GM12878 (cell line): ENCODE measurements at regions of chr15 and their contacts with region 1.

Region 1: DNA sequence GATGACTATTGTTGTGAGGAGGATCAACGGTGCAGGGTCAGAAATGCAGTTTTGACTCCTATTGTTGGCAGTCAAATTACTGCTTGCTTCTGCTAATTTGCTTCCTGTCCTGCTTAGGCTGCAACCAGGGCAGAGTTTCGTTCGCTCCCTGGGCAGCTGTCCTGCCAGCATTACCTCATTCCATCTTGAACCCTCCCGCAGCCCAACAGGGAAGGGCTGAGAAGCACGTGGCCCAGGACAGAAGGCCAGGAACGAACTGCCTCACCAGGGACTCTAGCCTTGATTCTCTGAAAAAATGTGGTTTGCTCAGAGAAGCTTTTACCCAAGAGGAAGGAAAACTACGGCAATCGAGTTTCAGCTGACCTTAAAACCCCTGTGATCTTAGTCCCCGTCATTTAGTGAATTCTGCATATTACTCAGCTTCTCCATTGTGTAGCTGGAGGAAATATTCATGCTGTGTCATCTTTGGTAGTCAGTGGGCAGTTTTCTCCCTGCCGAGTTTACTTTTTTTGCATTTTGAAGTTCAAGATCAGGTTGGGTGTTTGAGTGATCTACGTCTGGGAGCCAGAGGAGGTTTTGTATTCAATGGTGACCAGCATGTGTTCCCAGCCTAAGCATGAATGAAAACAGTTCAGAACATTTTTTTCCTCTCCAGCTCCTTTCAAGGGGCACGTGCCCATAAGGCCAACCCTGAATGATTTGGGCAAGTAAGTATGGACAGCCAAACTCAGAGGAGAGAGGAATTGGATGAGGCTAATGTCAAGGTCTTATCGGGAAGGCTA is 23.0 kb downstream of the TLNRD1 start:
- DNase-seq: peak; percentile 97
- ATAC-seq: peak; percentile 92
- H3K4me3 ChIP-seq: peak overlapping the region; percentile 22; the same call in 1 of the 2 replicates
- H3K27ac ChIP-seq: peak overlapping the region; percentile 91
- H3K4me1 ChIP-seq: peaks cover 41% of the 10 kb centered on the region
- H3K27me3 ChIP-seq: no peaks in the 10 kb centered on the region
- CTCF ChIP-seq: no peak
- EP300 ChIP-seq: peak; percentile 96 to 100
- POLR2A ChIP-seq: peak; percentile 59
- RAD21 ChIP-seq: no peak

Region 2: DNA sequence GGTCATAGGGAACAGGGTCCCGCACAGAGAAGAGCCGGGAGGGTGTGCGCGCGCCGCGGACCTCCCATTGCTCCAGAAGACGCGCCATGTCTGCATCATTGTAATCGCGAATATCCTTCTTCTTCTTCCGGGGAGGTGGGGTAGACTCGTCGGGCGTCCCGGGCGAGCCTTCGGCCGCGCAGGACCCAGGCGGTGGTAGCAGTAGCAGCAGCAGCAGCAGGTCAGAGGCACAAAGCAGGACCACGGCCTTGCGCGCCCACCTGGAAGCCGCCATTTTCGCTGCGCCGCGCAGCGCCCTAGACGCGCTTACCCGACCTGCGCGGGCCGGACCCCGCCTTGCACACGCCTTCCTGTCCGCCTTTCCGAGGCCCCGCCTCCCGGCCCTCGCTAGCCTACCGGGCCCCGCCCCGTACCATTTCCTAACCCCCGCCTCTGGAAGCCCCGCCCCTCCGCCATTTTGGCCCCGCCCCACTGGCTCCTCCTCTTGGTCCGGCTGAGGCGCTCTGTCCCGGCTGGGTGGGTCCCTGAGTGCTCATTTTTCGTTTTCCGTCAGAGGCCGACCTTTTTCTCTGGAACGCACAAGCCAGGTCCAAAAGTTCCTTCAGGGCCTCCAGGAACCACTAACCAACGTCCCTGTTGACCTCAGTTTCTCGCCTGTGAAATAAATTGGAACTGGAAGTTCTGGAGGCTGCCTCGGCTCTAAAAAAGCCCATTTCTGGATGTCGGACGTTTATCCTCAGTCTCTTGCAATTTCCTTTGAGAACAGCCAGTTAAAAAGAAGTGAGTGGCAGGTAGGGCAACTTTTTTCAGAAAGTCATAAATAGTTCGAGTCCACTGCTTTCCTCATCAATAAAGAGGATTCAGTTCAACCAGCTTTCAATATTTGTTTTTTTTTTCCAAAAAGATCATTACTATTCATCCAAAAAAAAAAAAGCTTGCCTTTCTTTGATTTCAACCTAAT is 33.9 kb before region 1 on chr15 and contains the start of gene MESD:
- CTCF ChIA-PET with region 1: no interaction called
- POLR2A ChIA-PET with region 1: interaction called, 7 read pairs
- RAD21 ChIA-PET with region 1: no interaction called
- SMC1A ChIA-PET with region 1: interaction called, 4 read pairs
- in situ Hi-C with region 1: no loop called
- intact Hi-C with region 1: loop called (anchors 1 kb)
- DNase-seq: peak; percentile 70
- ATAC-seq: peak; percentile 97
- H3K4me3 ChIP-seq: peak within 1 kb of the TSS; percentile 94
- H3K27ac ChIP-seq: peak within 1 kb of the TSS; percentile 80
- H3K4me1 ChIP-seq: peaks cover 4% of the 10 kb centered on the region
- H3K27me3 ChIP-seq: no peaks in the 10 kb centered on the region
- CTCF ChIP-seq: no peak
- EP300 ChIP-seq: no peak
- POLR2A ChIP-seq: peak; percentile 99
- RAD21 ChIP-seq: no peak
- polyA plus RNA-seq, gene MESD: 10.2 to 16.7 TPM

Region 3: GRCh38 chr15:81043935-81044575 is 20.4 kb after region 1 on chr15:
- CTCF ChIA-PET with region 1: interaction called, 4 read pairs
- POLR2A ChIA-PET with region 1: interaction called, 3 read pairs
- RAD21 ChIA-PET with region 1: interaction called, 7 read pairs
- SMC1A ChIA-PET with region 1: interaction called, 6 read pairs
- in situ Hi-C with region 1: no loop called
- intact Hi-C with region 1: loop called (anchors 2 kb)
- DNase-seq: no peak
- ATAC-seq: peak; percentile 72
- H3K4me3 ChIP-seq: no peak overlapping the region
- H3K27ac ChIP-seq: no peak overlapping the region
- H3K4me1 ChIP-seq: peaks cover 8% of the 10 kb centered on the region
- H3K27me3 ChIP-seq: no peaks in the 10 kb centered on the region
- CTCF ChIP-seq: no peak
- EP300 ChIP-seq: no peak
- POLR2A ChIP-seq: no peak
- RAD21 ChIP-seq: no peak